GM12878 (cell line): ENCODE measurements at regions of chr3 and their contacts with region 1.

Region 1: DNA sequence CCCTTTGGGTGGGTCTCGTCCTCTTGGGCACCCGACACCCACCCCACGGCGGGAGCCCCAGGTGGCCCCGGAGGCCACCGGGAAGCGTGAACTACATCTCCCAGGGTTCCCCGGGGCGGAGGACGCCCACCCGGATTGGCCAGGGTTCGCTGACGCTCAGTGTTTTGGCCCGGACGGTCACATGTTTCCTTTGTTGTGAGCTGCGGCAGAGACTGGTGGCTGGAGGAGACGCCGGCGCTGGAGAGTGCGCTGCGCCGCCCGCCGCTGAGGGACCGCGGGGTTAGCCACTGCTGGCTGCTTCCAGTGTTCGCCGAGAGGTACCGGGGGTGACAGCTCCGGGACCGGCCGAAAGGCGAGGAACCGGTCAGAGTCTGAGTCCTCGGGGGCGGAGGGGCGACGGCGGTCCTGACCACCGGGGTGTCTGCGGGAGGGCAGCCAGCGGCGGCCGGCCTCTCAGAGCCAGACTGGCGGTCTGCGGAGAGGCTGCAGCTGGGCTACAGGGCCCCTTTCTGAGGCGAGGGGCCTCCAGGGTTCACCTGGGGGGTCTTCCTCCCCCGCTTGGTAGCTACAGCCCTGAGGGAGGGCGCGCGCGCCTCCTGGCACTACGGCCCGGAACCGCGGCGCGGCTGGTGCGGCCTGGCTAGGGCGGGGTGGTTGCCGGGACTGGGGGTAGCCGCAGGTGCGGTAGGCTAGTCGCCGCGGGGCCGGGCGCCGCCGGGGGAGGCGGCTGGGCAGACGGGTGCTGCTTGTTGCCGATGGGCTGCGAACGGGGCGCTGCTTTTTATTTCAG is at the start of gene KLHL24:
- DNase-seq: peak; percentile 60
- ATAC-seq: peak; percentile 91
- H3K4me3 ChIP-seq: peak within 1 kb of the TSS; percentile 80
- H3K27ac ChIP-seq: peak within 1 kb of the TSS; percentile 77
- H3K4me1 ChIP-seq: peaks cover 19% of the 10 kb centered on the region; the same call in 1 of the 2 replicates
- H3K27me3 ChIP-seq: no peaks in the 10 kb centered on the region; a peak in 1 of 4 replicates
- CTCF ChIP-seq: 0 out of 6 replicates have a peak, but pooled peaks of 1 of the 3 experiments have one; percentile 5
- EP300 ChIP-seq: no peak
- POLR2A ChIP-seq: peak; percentile 90
- RAD21 ChIP-seq: no peak
- polyA plus RNA-seq, gene KLHL24: 0.91 to 1.6 TPM

Region 2: DNA sequence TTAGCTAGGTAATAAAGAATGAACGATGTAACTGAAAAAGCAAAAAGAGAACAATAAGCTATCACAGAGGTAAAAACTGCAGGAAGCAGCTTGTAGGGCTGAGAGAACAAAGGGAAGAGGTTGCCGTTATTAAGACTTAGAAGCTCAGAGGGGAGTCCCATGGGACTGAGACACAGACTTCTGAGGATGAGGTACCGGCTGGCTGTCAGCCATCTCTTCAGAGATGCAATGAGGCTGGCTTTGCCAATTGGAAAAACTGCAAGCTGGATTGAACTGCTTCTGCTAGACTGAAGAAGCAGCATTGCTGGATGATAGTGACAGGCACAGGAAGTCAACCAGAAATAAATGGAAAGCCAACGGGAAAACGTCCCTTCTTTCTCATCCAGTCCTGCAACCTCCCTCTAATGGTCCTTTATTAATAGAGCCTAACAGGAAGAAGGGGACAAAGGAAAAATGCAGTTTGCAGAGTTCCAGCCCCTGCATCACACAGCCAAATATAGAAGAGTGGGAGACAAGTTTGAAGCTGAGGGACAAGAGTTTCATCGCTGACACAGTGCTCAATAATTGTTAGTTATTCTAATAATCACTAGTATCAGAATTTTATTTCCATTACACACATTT is 59.0 kb before region 1 on chr3:
- CTCF ChIA-PET with region 1: interaction called, 3 read pairs
- POLR2A ChIA-PET with region 1: interaction called, 4 read pairs
- RAD21 ChIA-PET with region 1: interaction called, 11 read pairs
- SMC1A ChIA-PET with region 1: interaction called, 7 read pairs
- in situ Hi-C with region 1: no loop called
- intact Hi-C with region 1: no loop called
- DNase-seq: no peak
- ATAC-seq: no peak
- H3K4me3 ChIP-seq: no peak overlapping the region
- H3K27ac ChIP-seq: no peak overlapping the region
- H3K4me1 ChIP-seq: peaks cover 8% of the 10 kb centered on the region; the same call in 1 of the 2 replicates
- H3K27me3 ChIP-seq: peaks cover 0 to 21% of the 10 kb centered on the region in 2 experiments; a peak in 2 of 4 replicates
- CTCF ChIP-seq: no peak
- EP300 ChIP-seq: no peak
- POLR2A ChIP-seq: no peak
- RAD21 ChIP-seq: no peak

Region 3: DNA sequence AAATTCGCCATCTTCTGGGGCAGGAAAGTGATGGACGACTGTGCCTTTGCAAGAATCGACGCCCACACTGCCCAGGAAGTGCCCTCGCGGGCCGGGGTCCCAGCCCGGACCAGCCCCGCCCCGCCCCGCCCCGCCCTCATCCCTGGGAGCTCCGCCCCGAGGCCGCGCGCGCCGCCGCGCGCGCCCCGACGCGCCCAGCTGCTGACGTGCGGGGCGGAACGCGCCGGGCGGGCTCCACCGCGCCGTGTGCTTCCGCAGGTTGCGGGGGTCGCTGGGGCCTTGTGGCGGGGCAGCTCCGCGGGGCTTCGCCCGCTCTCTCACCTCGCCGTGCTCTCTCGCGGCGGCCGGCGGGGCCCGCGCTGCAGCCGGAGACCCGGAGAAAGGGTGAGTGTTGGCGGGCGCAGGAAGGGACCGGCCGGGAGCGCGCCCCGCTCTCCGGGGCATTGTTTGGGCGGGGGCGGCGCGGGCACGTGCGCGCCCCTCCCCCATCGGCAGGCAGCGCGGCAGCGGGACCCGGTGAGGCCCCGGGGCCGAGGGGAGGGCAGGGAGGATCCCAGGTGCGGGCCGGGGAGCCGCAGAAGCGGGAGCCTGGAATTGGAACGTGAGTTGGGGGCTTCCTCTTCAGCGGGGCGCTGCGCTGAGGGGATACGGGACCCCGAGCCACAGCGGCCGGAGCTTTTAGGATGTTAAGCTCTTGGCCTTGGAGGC is 62.1 kb after region 1 on chr3 and contains the start of gene YEATS2:
- CTCF ChIA-PET with region 1: interaction called, 10 read pairs
- POLR2A ChIA-PET with region 1: interaction called, 28 read pairs
- RAD21 ChIA-PET with region 1: interaction called, 14 read pairs
- SMC1A ChIA-PET with region 1: interaction called, 7 read pairs
- in situ Hi-C with region 1: no loop called
- intact Hi-C with region 1: loop called (anchors 2 kb)
- DNase-seq: no peak
- ATAC-seq: peak; percentile 82
- H3K4me3 ChIP-seq: peak within 1 kb of the TSS; percentile 99
- H3K27ac ChIP-seq: peak within 1 kb of the TSS; percentile 91
- H3K4me1 ChIP-seq: no peaks in the 10 kb centered on the region
- H3K27me3 ChIP-seq: no peaks in the 10 kb centered on the region
- CTCF ChIP-seq: no peak
- EP300 ChIP-seq: no peak
- POLR2A ChIP-seq: peak; percentile 81
- RAD21 ChIP-seq: no peak
- polyA plus RNA-seq, gene YEATS2: 1.9 to 3.8 TPM